ENCODE measurements at regions of chr9 and their contacts with region 1.

Region 1: DNA sequence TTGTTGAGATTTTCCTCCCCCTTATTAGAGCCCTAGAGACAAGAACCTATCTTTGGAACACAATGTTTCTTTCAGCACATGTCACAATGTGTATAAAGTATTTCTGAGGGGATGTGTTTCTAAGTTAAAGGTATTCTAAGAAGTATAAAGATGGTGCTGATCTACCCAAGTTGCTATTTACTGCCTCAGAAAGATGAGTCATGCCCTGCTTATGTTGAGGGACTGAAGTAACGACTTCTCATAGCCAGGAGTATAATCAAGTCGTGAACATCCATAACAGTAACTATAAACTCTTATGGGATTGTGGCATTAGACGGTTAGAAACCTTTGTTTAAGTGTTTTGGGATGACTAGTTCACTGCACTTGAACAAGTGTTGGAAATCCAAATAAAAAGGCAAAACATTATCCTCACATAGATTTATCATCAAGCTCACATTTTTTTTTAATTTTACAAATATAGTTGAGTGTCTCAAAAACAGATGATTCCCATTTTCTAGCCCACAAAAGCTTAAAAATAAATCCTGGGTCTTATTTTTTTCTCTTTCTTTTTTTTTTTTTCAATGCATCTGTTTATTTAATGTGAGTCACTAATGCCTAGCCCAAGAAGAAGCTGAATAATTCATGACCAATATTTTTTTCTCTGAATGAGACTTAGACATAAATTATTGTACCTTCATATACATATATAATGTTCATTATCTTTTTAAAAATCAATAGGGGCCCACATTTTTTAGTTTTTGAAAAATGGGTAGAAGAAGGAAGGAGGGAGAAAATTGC is 12.2 kb upstream of the TMEM252 start:
- DNase-seq: no peak
- ATAC-seq: peak in 3 of 8 donors; percentile 28 to 53 (median 39)
- H3K4me3 ChIP-seq: no peak overlapping the region
- H3K27ac ChIP-seq: no peak overlapping the region
- H3K4me1 ChIP-seq: peaks cover 0 to 16% (median 0%) of the 10 kb centered on the region in 9 donors
- H3K27me3 ChIP-seq: no peaks in the 10 kb centered on the region
- CTCF ChIP-seq: no peak

Region 2: GRCh38 chr9:68515326-68515901 is 37.5 kb before region 1 on chr9:
- intact Hi-C with region 1: loop called in 1 of 10 experiments (anchors 5 kb)
- DNase-seq: no peak
- ATAC-seq: peak in 5 of 8 donors; percentile 31 to 80 (median 60)
- H3K4me3 ChIP-seq: no peak overlapping the region
- H3K27ac ChIP-seq: peak overlapping the region in 2 of 10 donors; percentile 4 to 46
- H3K4me1 ChIP-seq: peaks cover 0 to 35% (median 17%) of the 10 kb centered on the region in 9 donors
- H3K27me3 ChIP-seq: no peaks in the 10 kb centered on the region
- CTCF ChIP-seq: no peak

Region 3: DNA sequence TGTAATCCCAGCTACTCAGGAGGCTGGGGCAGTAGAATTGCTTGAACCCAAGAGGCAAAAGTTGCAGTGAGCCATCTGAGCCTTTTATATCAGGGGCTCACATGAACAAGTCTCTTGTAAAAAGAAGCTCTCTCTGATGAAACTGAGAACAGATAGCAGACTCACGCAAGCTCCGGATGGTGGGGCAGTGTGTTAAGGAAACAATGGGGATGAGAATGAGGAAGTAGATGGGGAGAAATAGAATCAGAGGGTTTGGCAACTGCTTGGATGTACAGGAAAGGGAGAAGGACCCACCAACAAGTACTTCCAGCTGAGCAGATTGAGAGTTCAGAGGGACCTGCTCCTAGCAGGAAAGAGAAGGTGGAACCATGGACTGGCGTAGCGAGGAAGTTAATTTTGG is 30.8 kb before region 1 on chr9:
- intact Hi-C with region 1: loop called in 2 of 10 experiments (anchors 2 to 5 kb)
- DNase-seq: no peak
- ATAC-seq: peak in 3 of 8 donors; percentile 44 to 47 (median 47)
- H3K4me3 ChIP-seq: no peak overlapping the region
- H3K27ac ChIP-seq: no peak overlapping the region
- H3K4me1 ChIP-seq: no peaks in the 10 kb centered on the region
- H3K27me3 ChIP-seq: no peaks in the 10 kb centered on the region
- CTCF ChIP-seq: no peak

Measured in heart right ventricle (tissue), 16 donors.